Left colon (tissue), 2 donors: ENCODE measurements at regions of chr6 and their contacts with region 1.

Region 1: DNA sequence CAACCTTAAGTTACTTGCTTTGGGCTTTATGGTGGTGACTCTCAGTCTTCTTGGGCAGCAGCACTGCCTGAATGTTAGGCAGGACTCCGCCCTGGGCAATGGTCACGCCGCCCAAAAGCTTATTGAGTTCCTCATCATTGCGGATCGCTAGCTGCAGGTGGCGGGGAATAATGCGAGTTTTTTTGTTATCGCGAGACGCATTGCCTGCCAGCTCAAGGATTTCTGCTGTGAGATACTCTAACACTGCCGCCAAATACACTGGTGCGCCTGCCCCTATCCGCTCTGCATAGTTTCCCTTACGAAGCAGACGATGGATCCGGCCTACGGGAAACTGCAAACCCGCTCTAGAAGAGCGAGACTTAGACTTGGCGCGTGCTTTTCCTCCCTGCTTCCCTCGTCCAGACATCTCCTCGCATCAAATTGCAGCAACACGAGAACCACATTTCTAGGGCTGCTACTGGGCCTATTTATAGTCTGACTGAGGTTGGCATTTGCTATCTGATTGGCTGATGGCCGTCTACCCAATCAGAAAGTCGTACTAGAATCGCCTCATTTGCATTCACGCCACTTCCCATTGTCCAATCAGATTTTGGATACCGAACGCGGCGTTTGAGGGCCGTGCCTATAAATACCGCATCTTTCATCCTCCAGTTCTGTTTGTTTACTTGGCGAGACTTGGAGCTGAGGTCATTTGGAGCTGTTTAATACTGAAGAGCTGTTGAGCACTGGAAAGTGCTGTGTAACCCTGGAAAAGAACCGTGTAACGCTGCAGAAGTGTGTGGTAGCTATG is 28.2 kb upstream of the SLC17A4 start:
- DNase-seq: no peak
- ATAC-seq: no peak

Region 2: GRCh38 chr6:25899580-25900408 is 173.5 kb after region 1 on chr6:
- intact Hi-C with region 1: loop called in 1 of 2 experiments (anchors 10 kb)
- DNase-seq: no peak
- ATAC-seq: no peak

Region 3: GRCh38 chr6:26065952-26066380 is 339.6 kb after region 1 on chr6:
- intact Hi-C with region 1: no loop called
- DNase-seq: peak; percentile 70 to 74
- ATAC-seq: peak; percentile 91